ENCODE measurements at regions of chr14 and their contacts with region 1.

Region 1: GRCh38 chr14:100825713-100826331 is at the start of gene MEG3:
- DNase-seq: peak; percentile 65
- H3K4me3 ChIP-seq: peak within 1 kb of the TSS; percentile 86
- H3K27ac ChIP-seq: peak within 1 kb of the TSS; percentile 85
- H3K27me3 ChIP-seq: no peaks in the 10 kb centered on the region
- CTCF ChIP-seq: no peak
- polyA plus RNA-seq, gene MEG3: 306 and 310 TPM in 2 replicates

Region 2: DNA sequence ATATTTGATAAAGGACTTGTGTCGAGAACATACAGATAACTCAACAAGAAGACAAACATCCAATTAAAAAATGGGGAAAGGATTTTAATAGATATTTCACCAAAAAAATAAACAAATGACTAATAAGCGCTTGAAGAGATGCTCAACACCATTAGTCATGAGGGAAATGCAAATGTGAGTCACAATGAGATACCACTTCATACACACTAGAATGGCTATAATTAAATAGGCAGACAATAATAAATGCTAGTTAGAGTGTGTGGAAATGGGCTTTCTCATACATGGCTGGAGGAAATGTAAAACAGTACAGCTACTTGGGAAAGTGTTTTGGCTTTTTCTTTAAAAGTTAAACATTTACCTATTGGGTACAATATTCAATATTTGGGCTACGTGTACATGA is 64.3 kb before region 1 on chr14:
- CTCF ChIA-PET with region 1: no interaction called
- POLR2A ChIA-PET with region 1: no interaction called
- DNase-seq: peak; percentile 37
- H3K4me3 ChIP-seq: no peak overlapping the region
- H3K27ac ChIP-seq: no peak overlapping the region
- H3K27me3 ChIP-seq: peaks cover 12% of the 10 kb centered on the region
- CTCF ChIP-seq: no peak

Region 3: GRCh38 chr14:100815478-100816285 is 10.1 kb before region 1 on chr14:
- CTCF ChIA-PET with region 1: no interaction called
- POLR2A ChIA-PET with region 1: interaction called, 15 read pairs
- DNase-seq: peak; percentile 61
- H3K4me3 ChIP-seq: no peak overlapping the region
- H3K27ac ChIP-seq: peak overlapping the region; percentile 93
- H3K27me3 ChIP-seq: peaks cover 5% of the 10 kb centered on the region
- CTCF ChIP-seq: no peak

Region 4: DNA sequence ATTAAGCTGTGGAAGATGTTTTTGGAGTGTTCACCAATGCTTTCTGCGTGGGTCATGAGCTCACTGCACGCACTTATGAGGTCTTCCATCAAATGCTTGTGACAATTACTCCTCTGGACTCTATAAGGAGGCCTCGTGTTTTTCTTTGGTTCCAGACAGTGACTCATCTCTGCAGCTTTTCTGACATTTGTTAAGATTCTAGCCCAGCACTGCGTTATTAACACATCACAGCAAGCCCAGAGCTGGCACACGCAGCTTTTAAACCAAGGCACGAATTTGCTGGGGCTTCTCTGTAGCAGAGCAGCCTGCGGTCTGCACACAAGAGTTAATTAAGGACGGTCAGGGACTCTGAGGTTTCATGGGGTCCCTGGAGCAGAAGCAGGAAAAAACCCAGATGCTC is 17.0 kb after region 1 on chr14:
- CTCF ChIA-PET with region 1: interaction called, 7 read pairs
- POLR2A ChIA-PET with region 1: interaction called, 20 read pairs
- DNase-seq: peak; percentile 71
- H3K4me3 ChIP-seq: no peak overlapping the region
- H3K27ac ChIP-seq: peak overlapping the region; percentile 80
- H3K27me3 ChIP-seq: no peaks in the 10 kb centered on the region
- CTCF ChIP-seq: no peak

Region 5: GRCh38 chr14:100855256-100855875 is 29.5 kb after region 1 on chr14:
- CTCF ChIA-PET with region 1: no interaction called
- POLR2A ChIA-PET with region 1: no interaction called
- DNase-seq: no peak
- H3K4me3 ChIP-seq: no peak overlapping the region
- H3K27ac ChIP-seq: no peak overlapping the region
- H3K27me3 ChIP-seq: no peaks in the 10 kb centered on the region
- CTCF ChIP-seq: no peak

Region 6: GRCh38 chr14:100965296-100965695 is 139.5 kb after region 1 on chr14:
- CTCF ChIA-PET with region 1: no interaction called
- POLR2A ChIA-PET with region 1: no interaction called
- DNase-seq: no peak
- H3K4me3 ChIP-seq: no peak overlapping the region
- H3K27ac ChIP-seq: no peak overlapping the region
- H3K27me3 ChIP-seq: no peaks in the 10 kb centered on the region
- CTCF ChIP-seq: no peak

Measured in AG04450 (cell line).